Gastrocnemius medialis (tissue), 4 donors: ENCODE measurements at regions of chr5 and their contacts with region 1.

Region 1: DNA sequence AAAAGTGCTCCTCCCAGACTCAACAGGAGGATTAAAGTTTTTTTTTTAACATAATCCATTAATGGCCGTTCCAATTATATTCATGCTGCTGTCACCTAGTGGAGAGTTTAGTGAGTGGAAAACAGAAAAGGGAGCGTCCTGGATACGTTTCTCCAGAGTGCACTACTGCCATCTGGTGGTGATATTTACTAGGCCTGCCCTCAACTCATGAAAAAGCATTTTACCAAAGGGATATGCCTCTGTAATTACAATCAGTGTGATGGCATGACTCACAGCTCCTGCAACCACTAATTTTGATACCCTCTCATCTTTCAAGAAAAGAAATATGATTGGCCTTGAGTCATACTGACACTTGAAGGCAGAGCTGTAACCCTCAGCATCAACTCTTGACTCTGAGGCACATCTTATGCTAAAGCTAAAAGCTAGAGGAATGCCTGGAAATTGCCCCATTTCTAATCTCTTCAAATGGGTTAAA is 20.0 kb downstream of the MINAR2 start:
- DNase-seq: peak; percentile 28 to 41
- ATAC-seq: peak; percentile 93 to 95
- H3K4me3 ChIP-seq: no peak overlapping the region
- H3K27ac ChIP-seq: no peak overlapping the region
- H3K4me1 ChIP-seq: no peaks in the 10 kb centered on the region
- H3K27me3 ChIP-seq: no peaks in the 10 kb centered on the region
- CTCF ChIP-seq: peak; percentile 73 to 95 (median 81)
- POLR2A ChIP-seq: no peak

Region 2: DNA sequence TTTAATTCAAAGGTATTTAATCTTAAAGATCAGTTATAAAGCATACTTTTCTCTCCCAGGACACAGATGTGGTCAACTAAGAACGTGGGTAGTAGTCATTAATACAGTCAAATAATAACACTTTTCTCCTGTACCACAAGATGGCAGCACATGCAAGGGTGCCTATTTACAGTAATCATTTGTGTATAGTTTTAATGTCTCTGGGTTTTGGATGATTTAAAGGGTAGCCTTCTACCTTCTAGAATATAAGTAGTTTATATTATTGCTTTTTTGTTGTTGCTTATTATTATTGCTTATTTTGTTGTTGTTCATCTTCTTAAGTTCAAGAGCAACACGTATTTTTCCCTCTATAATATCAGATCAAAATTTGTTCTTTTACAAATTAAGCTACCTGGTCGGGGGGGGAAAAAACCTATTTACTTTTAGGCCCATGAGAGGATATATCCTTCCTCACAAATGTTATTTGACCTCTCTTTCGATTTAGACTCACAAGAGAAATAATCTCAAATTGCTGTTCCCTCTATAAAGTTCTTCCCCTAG is 862.3 kb before region 1 on chr5:
- in situ Hi-C with region 1: loop called (anchors 10 to 25 kb)
- intact Hi-C with region 1: loop called (anchors 2 kb)
- DNase-seq: no peak
- ATAC-seq: peak in 1 of 2 donors; percentile 75
- H3K4me3 ChIP-seq: no peak overlapping the region
- H3K27ac ChIP-seq: no peak overlapping the region
- H3K4me1 ChIP-seq: no peaks in the 10 kb centered on the region
- H3K27me3 ChIP-seq: no peaks in the 10 kb centered on the region
- CTCF ChIP-seq: peak; percentile 48 to 77 (median 55)
- POLR2A ChIP-seq: no peak

Region 3: GRCh38 chr5:129172580-129172979 is 595.4 kb before region 1 on chr5:
- in situ Hi-C with region 1: loop called in 2 of 4 experiments (anchors 10 to 25 kb)
- intact Hi-C with region 1: loop called (anchors 5 kb)
- DNase-seq: no peak
- ATAC-seq: no peak
- H3K4me3 ChIP-seq: no peak overlapping the region
- H3K27ac ChIP-seq: no peak overlapping the region
- H3K4me1 ChIP-seq: no peaks in the 10 kb centered on the region
- H3K27me3 ChIP-seq: no peaks in the 10 kb centered on the region
- CTCF ChIP-seq: peak in 2 of 5 experiments; percentile 9 to 12
- POLR2A ChIP-seq: no peak

Region 4: DNA sequence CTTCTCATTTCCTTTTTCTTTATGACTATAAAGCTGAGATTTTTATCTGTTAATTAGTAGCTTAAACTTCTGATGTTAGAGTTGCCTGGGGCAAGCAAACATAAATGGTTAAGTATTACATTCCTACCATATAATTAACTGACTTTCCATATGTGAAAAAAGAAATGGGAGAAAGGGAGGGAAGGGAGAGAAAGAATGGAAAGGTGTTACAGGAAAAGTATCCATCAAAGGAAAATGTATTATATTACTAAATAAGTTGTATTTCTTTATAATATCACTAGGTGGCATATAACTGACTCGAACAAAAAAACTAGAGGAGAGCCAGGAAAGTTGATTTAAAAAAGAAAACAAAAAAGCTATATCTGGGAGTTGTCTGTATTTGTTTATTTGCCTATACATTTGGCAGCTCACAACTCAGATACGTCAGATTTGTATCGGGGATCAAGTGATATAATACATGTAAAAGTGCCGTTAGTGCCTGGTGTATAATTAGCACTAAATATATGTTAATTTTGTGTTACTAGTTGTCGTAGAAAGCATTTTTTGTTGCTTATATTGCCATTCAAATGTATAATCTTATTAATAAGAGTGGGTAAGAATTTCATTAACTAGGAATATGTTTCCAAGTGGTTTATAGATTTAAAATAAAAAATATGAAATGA is 367.5 kb before region 1 on chr5:
- in situ Hi-C with region 1: loop called in 1 of 4 experiments (anchors 25 kb)
- intact Hi-C with region 1: no loop called
- DNase-seq: no peak
- ATAC-seq: no peak
- H3K4me3 ChIP-seq: no peak overlapping the region
- H3K27ac ChIP-seq: no peak overlapping the region
- H3K4me1 ChIP-seq: no peaks in the 10 kb centered on the region
- H3K27me3 ChIP-seq: no peaks in the 10 kb centered on the region
- CTCF ChIP-seq: peak in 1 of 5 experiments; percentile 27
- POLR2A ChIP-seq: no peak

Region 5: GRCh38 chr5:129852747-129853352 is 84.9 kb after region 1 on chr5:
- in situ Hi-C with region 1: no loop called
- intact Hi-C with region 1: loop called (anchors 1 kb)
- DNase-seq: peak; percentile 16 to 31
- ATAC-seq: peak in 1 of 2 donors; percentile 55
- H3K4me3 ChIP-seq: no peak overlapping the region
- H3K27ac ChIP-seq: no peak overlapping the region
- H3K4me1 ChIP-seq: peaks cover 0 to 5% of the 10 kb centered on the region in 2 donors
- H3K27me3 ChIP-seq: no peaks in the 10 kb centered on the region
- CTCF ChIP-seq: peak; percentile 57 to 87 (median 67)
- POLR2A ChIP-seq: no peak

Region 6: GRCh38 chr5:131109540-131110255 is 1341.8 kb after region 1 on chr5:
- in situ Hi-C with region 1: no loop called
- intact Hi-C with region 1: loop called (anchors 2 kb)
- DNase-seq: no peak
- ATAC-seq: no peak
- H3K4me3 ChIP-seq: no peak overlapping the region
- H3K27ac ChIP-seq: no peak overlapping the region
- H3K4me1 ChIP-seq: no peaks in the 10 kb centered on the region
- H3K27me3 ChIP-seq: no peaks in the 10 kb centered on the region
- CTCF ChIP-seq: peak; percentile 14 to 59 (median 48)
- POLR2A ChIP-seq: no peak